ENCODE measurements at regions of chrX and their contacts with region 1.

Region 1: DNA sequence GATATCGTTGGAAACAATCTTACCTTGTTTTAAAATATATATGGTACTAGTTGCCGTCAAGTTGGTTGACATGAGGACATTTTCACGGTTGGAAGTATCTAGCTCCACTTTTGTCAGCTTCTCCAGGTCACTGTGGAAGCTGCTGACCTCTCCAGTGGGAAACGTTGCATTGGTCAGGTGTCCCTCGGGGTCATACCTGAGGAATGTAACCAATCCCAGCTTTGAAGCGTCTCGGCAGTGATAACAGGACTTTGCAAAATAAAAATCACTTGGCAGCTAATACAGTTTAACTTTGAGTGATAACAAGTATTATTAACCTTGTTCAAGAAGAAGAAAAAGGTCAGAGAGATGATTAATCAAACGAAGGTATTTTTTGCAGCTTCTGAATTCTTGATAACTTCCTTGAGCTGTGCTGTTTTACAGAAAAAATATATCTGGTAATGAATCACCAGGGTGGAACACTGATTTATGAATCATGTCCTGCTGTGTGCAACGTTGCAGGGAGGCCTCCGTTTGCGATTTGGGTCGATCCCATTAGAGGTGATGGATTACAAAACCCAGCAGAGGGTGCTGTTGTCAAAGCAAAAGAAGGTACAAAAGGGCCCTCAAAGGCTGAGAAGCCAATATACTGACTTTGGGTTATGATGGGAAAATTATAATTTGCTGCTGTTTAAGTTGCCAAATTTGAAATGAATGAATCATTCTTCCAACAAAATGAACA is 60.1 kb downstream of the SH2D1A start:
- DNase-seq: peak; percentile 76
- ATAC-seq: peak; percentile 99
- H3K4me3 Mint-ChIP-seq: no peak overlapping the region
- H3K27ac Mint-ChIP-seq: peak overlapping the region; percentile 47
- H3K4me1 Mint-ChIP-seq: peaks cover 28% of the 10 kb centered on the region
- H3K27me3 Mint-ChIP-seq: no peaks in the 10 kb centered on the region

Region 2: GRCh38 chrX:124300405-124300804 is 106.0 kb before region 1 on chrX:
- CTCF ChIA-PET with region 1: no interaction called
- POLR2A ChIA-PET with region 1: no interaction called
- intact Hi-C with region 1: no loop called
- DNase-seq: no peak
- ATAC-seq: peak; percentile 70
- H3K4me3 Mint-ChIP-seq: peak overlapping the region; percentile 38
- H3K27ac Mint-ChIP-seq: peak overlapping the region; percentile 60
- H3K4me1 Mint-ChIP-seq: peaks cover 19% of the 10 kb centered on the region
- H3K27me3 Mint-ChIP-seq: no peaks in the 10 kb centered on the region

Region 3: DNA sequence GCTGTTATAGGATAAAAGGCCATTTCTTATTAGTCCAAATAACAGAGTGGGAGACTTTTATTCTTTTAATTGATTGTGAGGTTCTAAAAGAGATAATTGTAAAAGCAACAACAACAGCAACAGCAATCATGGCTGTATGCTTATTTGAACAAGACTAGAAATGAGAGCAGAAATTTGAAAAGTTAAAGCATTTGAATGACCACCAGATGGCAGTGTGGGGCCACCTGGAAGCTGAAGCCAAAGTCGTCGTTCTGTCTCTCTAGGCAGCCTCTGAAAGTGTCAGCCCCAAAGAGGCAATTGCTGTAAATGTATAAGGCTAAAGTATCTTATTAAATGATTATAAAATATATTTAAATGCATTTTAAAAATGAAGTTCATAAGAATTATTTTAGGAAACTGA is 17.9 kb before region 1 on chrX:
- CTCF ChIA-PET with region 1: interaction called, 26 read pairs
- POLR2A ChIA-PET with region 1: no interaction called
- intact Hi-C with region 1: no loop called
- DNase-seq: peak; percentile 73
- ATAC-seq: peak; percentile 65
- H3K4me3 Mint-ChIP-seq: no peak overlapping the region
- H3K27ac Mint-ChIP-seq: no peak overlapping the region
- H3K4me1 Mint-ChIP-seq: peaks cover 27% of the 10 kb centered on the region
- H3K27me3 Mint-ChIP-seq: no peaks in the 10 kb centered on the region

Region 4: GRCh38 chrX:124395145-124395880 is 11.1 kb before region 1 on chrX:
- CTCF ChIA-PET with region 1: interaction called, 26 read pairs
- POLR2A ChIA-PET with region 1: no interaction called
- intact Hi-C with region 1: no loop called
- DNase-seq: no peak
- ATAC-seq: no peak
- H3K4me3 Mint-ChIP-seq: no peak overlapping the region
- H3K27ac Mint-ChIP-seq: peak overlapping the region; percentile 47
- H3K4me1 Mint-ChIP-seq: peaks cover 29% of the 10 kb centered on the region
- H3K27me3 Mint-ChIP-seq: no peaks in the 10 kb centered on the region

Region 5: GRCh38 chrX:124736553-124737240 is 330.2 kb after region 1 on chrX:
- CTCF ChIA-PET with region 1: interaction called, 3 read pairs
- POLR2A ChIA-PET with region 1: no interaction called
- intact Hi-C with region 1: loop called in 1 of 2 experiments (anchors 10 kb)
- DNase-seq: peak; percentile 72
- ATAC-seq: peak; percentile 89
- H3K4me3 Mint-ChIP-seq: peak overlapping the region; percentile 59
- H3K27ac Mint-ChIP-seq: peak overlapping the region; percentile 62
- H3K4me1 Mint-ChIP-seq: peaks cover 40% of the 10 kb centered on the region
- H3K27me3 Mint-ChIP-seq: no peaks in the 10 kb centered on the region

Region 6: DNA sequence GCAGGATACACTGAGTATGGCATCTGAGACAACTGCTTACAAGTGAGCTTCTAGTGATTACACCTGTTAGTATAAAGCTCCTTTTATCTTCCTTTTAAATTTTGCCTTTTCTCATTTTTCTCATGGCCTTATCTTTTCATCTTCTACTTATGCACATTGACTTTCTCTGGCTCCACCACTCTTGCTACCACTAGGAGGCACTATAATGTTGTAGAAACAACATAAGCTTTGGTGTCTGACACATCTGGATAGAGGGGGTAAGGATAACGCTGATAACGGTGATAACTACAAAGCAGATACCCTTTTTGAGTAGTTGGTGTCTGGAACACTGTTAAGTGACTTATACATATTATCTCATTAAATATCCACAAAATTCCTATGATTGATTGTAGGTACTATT is 725.8 kb after region 1 on chrX:
- CTCF ChIA-PET with region 1: interaction called, 5 read pairs
- POLR2A ChIA-PET with region 1: no interaction called
- intact Hi-C with region 1: loop called (anchors 2 to 5 kb)
- DNase-seq: no peak
- ATAC-seq: peak; percentile 47
- H3K4me3 Mint-ChIP-seq: no peak overlapping the region
- H3K27ac Mint-ChIP-seq: no peak overlapping the region
- H3K4me1 Mint-ChIP-seq: no peaks in the 10 kb centered on the region
- H3K27me3 Mint-ChIP-seq: no peaks in the 10 kb centered on the region

Region 7: DNA sequence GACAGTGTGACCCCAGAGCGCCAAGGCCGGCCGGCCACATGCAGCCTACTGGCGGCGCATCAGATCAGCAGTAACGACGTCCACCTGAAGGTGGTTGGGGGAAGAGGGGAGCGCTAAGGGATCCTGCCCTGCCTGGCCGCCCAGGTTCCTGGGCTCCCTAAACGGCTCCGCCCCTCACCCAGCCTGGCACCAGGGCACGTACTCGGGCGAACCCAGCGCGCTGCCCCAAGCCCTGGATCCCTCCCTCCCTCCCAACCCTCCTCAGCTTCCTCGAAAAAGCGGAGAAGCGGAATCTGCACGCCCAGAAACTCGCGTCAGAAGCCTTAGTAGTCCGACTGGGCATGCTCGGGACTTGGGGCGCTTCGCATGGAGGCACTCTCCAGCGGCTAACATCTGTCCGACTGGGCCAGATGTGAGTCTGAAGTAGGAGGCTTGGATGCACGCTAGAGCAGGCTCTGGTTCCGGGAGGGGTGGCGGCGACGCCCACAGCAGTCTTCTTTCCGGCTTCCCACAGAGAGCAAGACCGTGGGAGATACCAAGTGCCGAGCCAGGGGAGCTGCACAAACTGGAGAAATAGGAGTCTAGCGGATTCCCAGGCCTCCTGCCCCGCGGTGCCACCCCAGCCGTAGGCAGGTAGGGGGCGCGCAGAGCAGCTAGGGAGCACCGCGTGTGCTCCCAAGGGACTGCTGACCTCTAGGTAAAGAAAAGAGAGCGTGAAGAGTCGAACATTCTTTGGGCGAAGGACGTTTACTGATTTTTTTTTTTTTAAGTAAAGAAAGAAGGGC is 798.9 kb after region 1 on chrX:
- CTCF ChIA-PET with region 1: no interaction called
- POLR2A ChIA-PET with region 1: no interaction called
- intact Hi-C with region 1: loop called in 1 of 2 experiments (anchors 10 kb)
- DNase-seq: peak; percentile 50
- ATAC-seq: peak; percentile 55
- H3K4me3 Mint-ChIP-seq: peak overlapping the region; percentile 67
- H3K27ac Mint-ChIP-seq: no peak overlapping the region
- H3K4me1 Mint-ChIP-seq: peaks cover 18% of the 10 kb centered on the region
- H3K27me3 Mint-ChIP-seq: peaks cover 30% of the 10 kb centered on the region

Region 8: DNA sequence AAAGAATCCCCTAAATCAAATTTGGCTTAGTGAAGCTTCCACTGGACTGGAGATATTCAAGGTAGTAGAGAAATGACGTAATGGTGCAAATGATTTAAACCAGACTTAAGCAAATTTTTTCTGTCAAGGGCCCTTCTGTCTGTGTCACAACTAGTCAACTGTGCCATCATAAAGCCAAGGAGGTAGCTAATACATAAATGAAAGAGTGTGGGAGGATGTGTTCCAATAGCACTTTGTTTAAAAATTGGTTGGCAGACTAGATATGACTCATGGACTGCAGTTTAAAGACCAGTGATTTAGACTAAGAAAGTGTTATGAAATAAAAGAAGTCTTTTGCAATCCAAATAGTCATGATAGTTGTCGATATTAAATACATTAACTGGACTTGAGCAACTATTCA is 888.9 kb after region 1 on chrX:
- CTCF ChIA-PET with region 1: interaction called, 3 read pairs
- POLR2A ChIA-PET with region 1: no interaction called
- intact Hi-C with region 1: loop called in 1 of 2 experiments (anchors 10 kb)
- DNase-seq: no peak
- ATAC-seq: peak; percentile 74
- H3K4me3 Mint-ChIP-seq: peak overlapping the region; percentile 26
- H3K27ac Mint-ChIP-seq: peak overlapping the region; percentile 82
- H3K4me1 Mint-ChIP-seq: peaks cover 21% of the 10 kb centered on the region
- H3K27me3 Mint-ChIP-seq: no peaks in the 10 kb centered on the region